ENCODE measurements at regions of chr12 and their contacts with region 1.

Region 1: GRCh38 chr12:92363295-92364146 is 217.9 kb upstream of the BTG1 start:
- DNase-seq: peak; percentile 96
- H3K4me3 ChIP-seq: peak overlapping the region; percentile 70
- H3K27ac ChIP-seq: peak overlapping the region; percentile 99
- H3K4me1 ChIP-seq: peaks cover 69% of the 10 kb centered on the region
- CTCF ChIP-seq: no peak; the same call in 1 of the 2 replicates

Region 2: DNA sequence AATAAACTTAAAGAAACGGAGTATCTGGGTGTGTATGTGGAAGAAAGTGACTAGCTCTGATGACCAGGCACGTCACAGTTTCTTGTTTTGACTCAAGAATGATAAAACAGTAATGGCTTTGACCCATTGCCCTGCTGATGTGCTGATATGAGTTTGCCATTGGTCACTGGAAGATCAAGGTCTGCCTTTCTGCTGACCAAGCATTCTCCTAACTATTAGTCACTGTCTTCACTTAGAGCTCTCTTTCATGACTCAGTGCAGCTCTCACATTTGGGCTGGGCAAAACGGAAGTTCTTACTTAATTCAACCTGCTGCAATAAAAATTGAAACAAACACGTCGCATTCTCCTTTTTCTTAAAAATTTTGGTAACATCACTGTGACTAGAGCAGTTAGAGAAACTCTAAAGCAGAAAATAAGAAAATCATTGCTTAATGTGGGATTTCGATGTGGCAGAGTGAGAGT is 584.6 kb before region 1 on chr12:
- CTCF ChIA-PET with region 1: no interaction called
- POLR2A ChIA-PET with region 1: no interaction called
- intact Hi-C with region 1: no loop called
- DNase-seq: no peak
- H3K4me3 ChIP-seq: no peak overlapping the region
- H3K27ac ChIP-seq: no peak overlapping the region
- H3K4me1 ChIP-seq: no peaks in the 10 kb centered on the region
- CTCF ChIP-seq: no peak

Region 3: DNA sequence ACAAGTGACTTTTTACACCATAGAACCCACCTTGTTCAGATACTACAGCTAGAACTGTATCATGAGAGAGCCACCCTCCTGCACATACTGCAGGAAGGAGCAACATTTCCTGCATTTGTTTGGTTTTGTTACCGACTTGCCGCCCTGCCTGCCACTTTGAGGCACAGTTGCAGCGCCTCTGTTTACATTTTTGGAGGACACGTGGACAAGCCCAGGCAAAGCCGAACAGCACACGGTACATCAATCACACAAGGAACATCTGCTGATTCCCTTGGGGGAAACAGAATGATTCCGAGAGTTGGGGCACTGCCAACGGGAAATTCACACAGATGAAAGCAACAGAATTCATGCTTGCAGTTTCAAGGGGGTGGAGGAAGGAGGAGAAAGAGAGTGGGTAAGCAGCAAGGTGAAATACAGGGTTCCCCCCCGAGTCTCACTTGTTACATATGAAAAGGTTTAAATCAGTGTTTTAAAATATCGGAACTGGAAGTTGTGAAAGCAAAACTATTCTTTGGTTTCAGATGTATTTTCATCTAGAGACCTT is 328.6 kb before region 1 on chr12:
- CTCF ChIA-PET with region 1: no interaction called
- POLR2A ChIA-PET with region 1: interaction called, 4 read pairs
- intact Hi-C with region 1: loop called (anchors 10 kb)
- DNase-seq: peak; percentile 88
- H3K4me3 ChIP-seq: peak overlapping the region; percentile 64
- H3K27ac ChIP-seq: peak overlapping the region; percentile 64
- H3K4me1 ChIP-seq: peaks cover 70% of the 10 kb centered on the region
- CTCF ChIP-seq: no peak

Region 4: GRCh38 chr12:92398565-92399309 is 35.2 kb after region 1 on chr12:
- CTCF ChIA-PET with region 1: interaction called, 8 read pairs
- POLR2A ChIA-PET with region 1: interaction called, 76 read pairs
- intact Hi-C with region 1: loop called (anchors 1 kb)
- DNase-seq: peak; percentile 13
- H3K4me3 ChIP-seq: no peak overlapping the region
- H3K27ac ChIP-seq: no peak overlapping the region
- H3K4me1 ChIP-seq: peaks cover 55% of the 10 kb centered on the region
- CTCF ChIP-seq: no peak

Region 5: GRCh38 chr12:92431146-92431545 is 67.6 kb after region 1 on chr12:
- CTCF ChIA-PET with region 1: no interaction called
- POLR2A ChIA-PET with region 1: interaction called, 17 read pairs
- intact Hi-C with region 1: no loop called
- DNase-seq: peak; percentile 68
- H3K4me3 ChIP-seq: no peak overlapping the region
- H3K27ac ChIP-seq: peak overlapping the region; percentile 6
- H3K4me1 ChIP-seq: peaks cover 51% of the 10 kb centered on the region
- CTCF ChIP-seq: peak; percentile 68

Region 6: GRCh38 chr12:92466391-92467305 is 103.1 kb after region 1 on chr12:
- CTCF ChIA-PET with region 1: interaction called, 4 read pairs
- POLR2A ChIA-PET with region 1: interaction called, 39 read pairs
- intact Hi-C with region 1: loop called (anchors 1 kb)
- DNase-seq: peak; percentile 92
- H3K4me3 ChIP-seq: peak overlapping the region; percentile 70
- H3K27ac ChIP-seq: peak overlapping the region; percentile 98
- H3K4me1 ChIP-seq: peaks cover 83% of the 10 kb centered on the region
- CTCF ChIP-seq: no peak; the same call in 1 of the 2 replicates

Region 7: GRCh38 chr12:92505254-92506231 is 142.0 kb after region 1 on chr12:
- CTCF ChIA-PET with region 1: interaction called, 3 read pairs
- POLR2A ChIA-PET with region 1: interaction called, 29 read pairs
- intact Hi-C with region 1: no loop called
- DNase-seq: peak; percentile 73
- H3K4me3 ChIP-seq: peak overlapping the region; percentile 55
- H3K27ac ChIP-seq: peak overlapping the region; percentile 79
- H3K4me1 ChIP-seq: peaks cover 53% of the 10 kb centered on the region
- CTCF ChIP-seq: no peak

Measured in OCI-LY7 (cell line).